ENCODE measurements at regions of chr10 and their contacts with region 1.

Region 1: GRCh38 chr10:7696545-7696944 is 6.6 kb upstream of the ITIH2 start:
- DNase-seq: peak; percentile 71 to 86
- ATAC-seq: peak; percentile 54
- H3K4me3 ChIP-seq: no peak overlapping the region
- H3K27ac ChIP-seq: peak overlapping the region in 1 of 2 donors; percentile 94
- H3K4me1 ChIP-seq: peaks cover 0 to 8% of the 10 kb centered on the region in 2 donors
- H3K27me3 ChIP-seq: no peaks in the 10 kb centered on the region

Region 2: GRCh38 chr10:7787857-7788638 is 91.5 kb after region 1 on chr10 and contains the starts of genes ATP5F1C and KIN:
- intact Hi-C with region 1: loop called in 1 of 2 experiments (anchors 10 kb)
- DNase-seq: peak; percentile 99
- ATAC-seq: peak; percentile 100
- H3K4me3 ChIP-seq: peak within 1 kb of the TSS; percentile 76 to 92
- H3K27ac ChIP-seq: peak within 1 kb of the TSS in 1 of 2 donors; percentile 16
- H3K4me1 ChIP-seq: peaks cover 0 to 3% of the 10 kb centered on the region in 2 donors
- H3K27me3 ChIP-seq: no peaks in the 10 kb centered on the region
- total RNA-seq, gene ATP5F1C: 133 to 137 TPM
- total RNA-seq, gene KIN: 13.4 TPM

Measured in aorta (tissue), 5 donors.